MCF 10A (cell line): ENCODE measurements at regions of chr12 and their contacts with region 1.

Region 1: GRCh38 chr12:117587631-117588287 is 226.3 kb upstream of the NOS1 start:
- DNase-seq: peak; percentile 65
- H3K4me3 Mint-ChIP-seq: no peak overlapping the region
- H3K27ac Mint-ChIP-seq: no peak overlapping the region
- H3K4me1 Mint-ChIP-seq: no peaks in the 10 kb centered on the region
- H3K27me3 Mint-ChIP-seq: peaks cover 21% of the 10 kb centered on the region
- CTCF ChIP-seq: peak; percentile 78

Region 2: GRCh38 chr12:117466677-117467362 is 120.9 kb before region 1 on chr12:
- CTCF ChIA-PET with region 1: no interaction called
- POLR2A ChIA-PET with region 1: no interaction called
- intact Hi-C with region 1: no loop called
- DNase-seq: no peak
- H3K4me3 Mint-ChIP-seq: no peak overlapping the region
- H3K27ac Mint-ChIP-seq: no peak overlapping the region
- H3K4me1 Mint-ChIP-seq: no peaks in the 10 kb centered on the region
- H3K27me3 Mint-ChIP-seq: no peaks in the 10 kb centered on the region
- CTCF ChIP-seq: no peak

Region 3: GRCh38 chr12:117603316-117604113 is 15.8 kb after region 1 on chr12:
- CTCF ChIA-PET with region 1: interaction called, 24 read pairs
- POLR2A ChIA-PET with region 1: no interaction called
- intact Hi-C with region 1: no loop called
- DNase-seq: no peak
- H3K4me3 Mint-ChIP-seq: no peak overlapping the region
- H3K27ac Mint-ChIP-seq: no peak overlapping the region
- H3K4me1 Mint-ChIP-seq: no peaks in the 10 kb centered on the region
- H3K27me3 Mint-ChIP-seq: peaks cover 12% of the 10 kb centered on the region
- CTCF ChIP-seq: no peak

Region 4: DNA sequence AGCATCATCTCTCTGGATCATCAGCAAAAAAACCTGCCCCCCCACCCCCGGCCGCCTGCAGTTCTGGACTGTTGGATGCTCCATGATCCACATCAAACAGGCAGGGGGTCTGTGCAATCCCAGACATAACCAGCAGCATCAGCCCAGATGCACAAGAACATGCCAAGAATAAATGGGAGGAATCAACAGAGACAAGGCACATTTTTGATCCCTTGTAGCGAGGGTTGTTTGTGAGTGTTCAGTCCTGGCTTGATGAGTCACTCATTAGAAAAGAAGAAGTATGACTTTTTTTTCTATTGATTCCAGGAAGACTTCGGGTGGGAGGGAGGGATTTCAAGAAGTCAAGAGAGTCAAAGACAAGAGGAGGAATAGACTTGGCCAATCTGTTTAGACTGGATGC is 136.8 kb after region 1 on chr12:
- CTCF ChIA-PET with region 1: no interaction called
- POLR2A ChIA-PET with region 1: no interaction called
- intact Hi-C with region 1: no loop called
- DNase-seq: peak; percentile 39
- H3K4me3 Mint-ChIP-seq: no peak overlapping the region
- H3K27ac Mint-ChIP-seq: no peak overlapping the region
- H3K4me1 Mint-ChIP-seq: peaks cover 6% of the 10 kb centered on the region
- H3K27me3 Mint-ChIP-seq: peaks cover 14% of the 10 kb centered on the region
- CTCF ChIP-seq: no peak

Region 5: DNA sequence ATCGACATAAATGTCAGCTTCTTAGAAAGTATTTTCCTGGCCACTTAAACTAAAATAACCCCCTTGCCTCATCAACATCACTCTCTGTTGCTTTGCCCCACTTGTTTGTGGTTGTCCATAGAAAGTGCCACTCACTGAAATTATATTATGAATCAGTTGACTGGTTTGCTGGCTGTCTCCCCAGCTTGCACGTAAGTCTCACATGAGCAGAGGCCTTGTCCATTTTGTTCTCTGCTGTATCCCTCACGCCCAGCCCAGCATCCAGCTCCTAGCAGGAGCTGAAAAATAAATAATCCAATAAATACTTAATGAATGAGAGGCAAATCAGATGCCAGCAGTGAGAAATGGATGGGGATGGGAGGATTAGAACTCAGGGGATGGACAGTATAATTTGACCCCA is 221.8 kb after region 1 on chr12:
- CTCF ChIA-PET with region 1: no interaction called
- POLR2A ChIA-PET with region 1: no interaction called
- intact Hi-C with region 1: no loop called
- DNase-seq: no peak
- H3K4me3 Mint-ChIP-seq: no peak overlapping the region
- H3K27ac Mint-ChIP-seq: no peak overlapping the region
- H3K4me1 Mint-ChIP-seq: peaks cover 7% of the 10 kb centered on the region
- H3K27me3 Mint-ChIP-seq: no peaks in the 10 kb centered on the region
- CTCF ChIP-seq: no peak